Activated CD8-positive, alpha-beta T cell treated with anti-CD3 and anti-CD28 coated beads, Interleukin-2, amount 10 ng/mL, durations not matched to agents 7 days and 5 days (primary cell): ENCODE measurements at regions of chr11 and their contacts with region 1.

Region 1: DNA sequence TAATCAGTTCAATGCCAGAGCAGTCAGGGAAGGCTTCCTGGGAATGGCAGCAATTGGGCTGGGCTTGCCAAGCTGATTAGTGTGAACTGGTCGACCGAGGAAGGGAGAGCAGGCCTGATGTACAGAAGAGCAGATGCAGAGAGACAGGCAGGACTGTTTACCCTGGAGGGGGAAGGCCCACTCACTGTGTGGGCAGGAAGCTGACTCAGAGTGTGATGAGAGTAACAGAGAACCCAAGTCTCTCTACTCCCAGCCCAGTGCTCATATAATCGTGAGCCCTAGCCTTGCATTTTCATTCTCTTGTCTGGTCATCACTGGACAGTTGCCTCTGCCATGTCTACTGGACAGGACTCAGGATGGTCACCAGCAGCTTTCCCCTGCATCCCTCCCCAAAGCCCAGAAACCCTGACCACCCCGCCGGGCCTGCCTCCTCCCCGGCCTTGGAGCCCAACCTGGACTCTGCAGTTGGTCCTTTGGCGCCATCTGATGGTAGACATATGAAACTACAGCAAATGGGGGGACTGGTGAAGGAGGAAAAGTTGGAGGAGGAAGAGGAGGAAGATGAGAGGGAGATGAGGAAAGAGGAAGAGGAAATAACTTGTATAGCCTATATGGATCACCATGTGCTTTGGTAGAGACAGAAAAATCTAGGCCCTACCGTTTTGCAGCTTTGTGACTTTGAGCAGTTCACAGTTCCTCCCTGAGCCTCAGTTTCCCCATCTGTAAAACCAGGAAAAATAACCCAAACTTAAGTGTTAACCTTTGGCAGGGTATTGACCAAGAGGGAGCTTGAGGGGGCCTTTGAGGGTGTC is 43.4 kb upstream of the PRDM11 start:
- DNase-seq: peak; percentile 74
- ATAC-seq: peak; percentile 96
- H3K4me3 Mint-ChIP-seq: peak overlapping the region; percentile 62
- H3K27ac Mint-ChIP-seq: peak overlapping the region; percentile 84
- H3K4me1 Mint-ChIP-seq: peaks cover 11% of the 10 kb centered on the region
- H3K27me3 Mint-ChIP-seq: peaks cover 25% of the 10 kb centered on the region

Region 2: DNA sequence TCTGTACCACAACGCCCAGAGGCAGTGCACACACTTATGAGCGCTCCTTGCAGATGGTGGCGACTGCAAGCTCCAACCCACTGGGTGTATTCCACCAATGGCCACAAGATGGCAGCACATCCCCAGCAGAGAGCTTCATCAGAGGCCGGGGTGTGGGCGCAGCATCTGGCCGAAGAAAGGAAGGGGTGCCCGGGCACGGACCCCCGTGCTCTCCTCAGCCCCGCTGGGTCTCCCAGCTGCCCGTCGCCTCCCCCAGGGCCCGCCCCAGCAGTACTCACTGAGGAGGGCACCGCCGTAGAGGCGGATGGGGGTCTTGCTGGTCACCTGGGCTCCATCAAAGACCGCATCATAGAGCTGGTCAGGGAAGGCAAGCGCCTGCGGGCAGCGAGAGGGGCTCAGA is 166.5 kb before region 1 on chr11:
- CTCF ChIA-PET with region 1: interaction called, 364 read pairs
- POLR2A ChIA-PET with region 1: interaction called, 13 read pairs
- DNase-seq: peak; percentile 86
- ATAC-seq: peak; percentile 77
- H3K4me3 Mint-ChIP-seq: no peak overlapping the region
- H3K27ac Mint-ChIP-seq: no peak overlapping the region
- H3K4me1 Mint-ChIP-seq: no peaks in the 10 kb centered on the region
- H3K27me3 Mint-ChIP-seq: no peaks in the 10 kb centered on the region

Region 3: GRCh38 chr11:44955015-44955738 is 147.8 kb before region 1 on chr11:
- CTCF ChIA-PET with region 1: interaction called, 16 read pairs
- POLR2A ChIA-PET with region 1: no interaction called
- DNase-seq: no peak
- ATAC-seq: no peak
- H3K4me3 Mint-ChIP-seq: no peak overlapping the region
- H3K27ac Mint-ChIP-seq: peak overlapping the region; percentile 37
- H3K4me1 Mint-ChIP-seq: peaks cover 21% of the 10 kb centered on the region
- H3K27me3 Mint-ChIP-seq: peaks cover 7% of the 10 kb centered on the region

Region 4: GRCh38 chr11:45079943-45080719 is 22.9 kb before region 1 on chr11:
- CTCF ChIA-PET with region 1: interaction called, 68 read pairs
- POLR2A ChIA-PET with region 1: interaction called, 5 read pairs
- DNase-seq: peak; percentile 78
- ATAC-seq: peak; percentile 93
- H3K4me3 Mint-ChIP-seq: peak overlapping the region; percentile 45
- H3K27ac Mint-ChIP-seq: peak overlapping the region; percentile 94
- H3K4me1 Mint-ChIP-seq: peaks cover 56% of the 10 kb centered on the region
- H3K27me3 Mint-ChIP-seq: peaks cover 3% of the 10 kb centered on the region

Region 5: DNA sequence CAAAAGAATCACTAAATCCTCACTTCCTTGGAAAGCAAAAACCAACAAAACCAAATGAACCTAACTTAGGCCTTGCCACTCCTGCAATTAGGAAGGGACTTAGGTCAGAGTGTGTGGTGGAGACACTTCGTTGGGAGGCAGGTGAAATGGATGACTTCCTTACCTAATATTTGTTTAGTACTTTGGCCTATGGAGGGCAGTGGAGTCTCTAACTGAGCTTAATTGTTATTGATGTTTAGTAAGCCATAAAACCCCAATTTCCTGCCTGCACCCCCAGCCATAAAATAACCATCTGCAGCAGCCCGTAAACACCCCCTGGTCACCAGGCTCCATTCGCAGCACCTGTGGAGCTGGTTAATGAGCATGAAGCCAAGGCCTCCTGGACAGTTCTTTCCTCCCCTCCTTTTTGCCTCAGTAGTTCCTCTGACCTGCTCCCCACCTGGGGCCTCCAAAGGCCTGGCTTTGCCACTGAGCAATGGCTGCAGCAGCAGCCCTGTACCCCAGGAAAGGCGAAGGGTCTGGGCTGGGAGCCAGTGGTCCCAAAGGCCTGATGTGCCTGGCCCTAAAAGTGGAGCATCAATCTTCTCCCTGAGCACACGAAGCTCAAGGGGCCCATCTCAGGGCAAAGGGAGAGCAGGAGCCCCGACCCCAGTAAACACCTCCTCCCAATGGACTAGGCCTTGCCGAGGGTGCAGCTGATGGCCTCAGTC is 198.7 kb after region 1 on chr11:
- CTCF ChIA-PET with region 1: no interaction called
- POLR2A ChIA-PET with region 1: no interaction called
- DNase-seq: no peak
- ATAC-seq: no peak
- H3K4me3 Mint-ChIP-seq: no peak overlapping the region
- H3K27ac Mint-ChIP-seq: no peak overlapping the region
- H3K4me1 Mint-ChIP-seq: peaks cover 3% of the 10 kb centered on the region
- H3K27me3 Mint-ChIP-seq: peaks cover 15% of the 10 kb centered on the region